ENCODE measurements at regions of chr2 and their contacts with region 1.

Region 1: DNA sequence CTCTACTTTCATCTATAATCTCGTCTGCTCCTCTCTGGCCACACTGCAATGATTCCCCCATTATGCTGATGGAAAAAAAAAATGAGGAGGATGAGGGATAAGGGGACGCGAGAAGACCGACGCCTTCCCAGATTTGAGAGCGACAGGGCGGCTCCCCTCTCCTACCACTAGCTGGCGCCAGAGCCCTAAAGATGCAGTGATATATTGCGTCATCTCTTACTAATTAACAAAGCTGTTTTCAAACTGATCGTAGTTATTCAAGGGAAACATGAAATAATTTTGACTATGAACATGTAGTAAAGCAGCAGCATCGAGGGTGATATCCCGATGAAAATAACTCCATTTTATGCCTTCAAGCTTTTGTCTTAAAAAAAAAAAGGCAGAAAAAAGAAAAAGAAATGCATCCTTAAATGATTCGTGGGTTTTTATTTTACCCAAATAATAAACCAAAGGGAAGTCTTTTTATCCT is 48.0 kb upstream of the HNRNPA3 start:
- DNase-seq: peak; percentile 91

Region 2: DNA sequence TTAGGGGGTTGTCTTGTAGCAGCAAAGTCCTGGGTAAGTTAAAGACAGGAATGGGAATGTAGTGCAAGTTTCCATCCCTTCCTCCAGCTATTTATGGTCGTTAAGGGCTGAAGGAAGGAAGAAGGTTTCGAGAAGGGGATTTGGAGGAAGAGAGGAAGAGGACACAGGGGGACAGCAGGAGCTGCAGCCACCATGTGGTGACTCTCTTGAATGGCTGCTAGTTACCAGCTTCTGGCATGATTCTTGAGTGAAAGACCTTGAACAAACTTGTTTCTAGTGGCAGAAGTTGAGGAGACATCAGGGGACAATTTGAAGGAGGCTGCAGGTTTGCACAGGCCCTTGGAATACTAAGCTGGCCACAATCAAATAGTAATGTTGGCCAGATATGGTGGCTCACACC is 778.8 kb before region 1 on chr2:
- intact Hi-C with region 1: no loop called
- DNase-seq: no peak

Region 3: DNA sequence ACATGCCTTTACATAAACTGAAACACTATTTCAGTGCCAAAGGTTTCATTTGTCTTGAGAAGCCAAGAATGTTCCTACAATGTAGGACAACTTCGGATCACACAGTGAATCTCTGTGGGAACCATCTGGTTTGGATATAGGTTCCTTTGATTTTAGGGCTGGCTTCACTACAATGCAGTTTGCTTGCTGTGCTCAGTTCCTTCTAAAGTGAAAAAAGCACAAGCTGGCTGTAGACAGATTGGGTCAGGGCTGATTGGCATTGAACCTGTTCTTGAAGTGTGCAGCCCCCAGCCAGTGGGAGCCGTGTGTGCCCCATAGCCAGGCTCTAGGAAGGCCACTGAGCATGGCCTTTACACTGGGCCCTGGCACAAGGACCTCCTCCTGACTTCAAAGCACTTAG is 119.9 kb before region 1 on chr2:
- intact Hi-C with region 1: no loop called
- DNase-seq: no peak

Region 4: DNA sequence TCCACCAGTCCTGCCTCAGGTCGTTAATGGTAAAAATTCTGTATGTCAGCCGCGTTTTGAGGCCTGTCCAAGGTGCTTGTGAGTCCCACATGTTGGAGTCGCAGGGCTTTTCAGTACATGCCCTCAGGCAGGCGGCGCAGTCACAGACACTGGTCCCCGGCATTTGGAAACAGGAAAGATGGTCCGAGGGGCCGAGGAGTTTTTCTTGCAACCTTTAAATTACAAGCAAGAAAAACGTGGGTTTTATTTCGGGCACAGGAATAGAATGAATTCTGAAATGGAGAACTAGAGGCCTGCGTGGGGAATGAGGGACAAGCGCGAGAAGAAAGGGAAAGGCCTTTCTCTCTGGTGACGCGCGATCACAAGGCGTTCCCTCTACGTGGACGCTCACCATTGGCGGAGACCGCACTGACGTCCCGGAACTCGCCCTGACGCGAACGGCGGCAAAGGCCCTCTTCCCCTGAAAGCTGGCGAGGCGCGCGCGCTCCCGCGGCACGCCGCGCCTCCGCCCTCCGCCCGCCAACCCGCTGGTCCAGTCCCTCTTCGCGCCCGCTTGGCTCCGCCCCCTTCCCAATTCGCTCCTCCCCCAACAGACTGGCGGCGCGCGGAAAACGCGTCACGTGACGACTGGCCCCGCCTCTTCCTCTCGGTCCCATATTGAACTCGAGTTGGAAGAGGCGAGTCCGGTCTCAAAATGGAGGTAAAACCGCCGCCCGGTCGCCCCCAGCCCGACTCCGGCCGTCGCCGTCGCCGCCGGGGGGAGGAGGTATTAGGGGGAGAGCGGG is 47.7 kb after region 1 on chr2 and contains the start of gene HNRNPA3:
- intact Hi-C with region 1: loop called (anchors 1 kb)
- DNase-seq: peak; percentile 100
- total RNA-seq, gene HNRNPA3: 95.7 TPM

Region 5: DNA sequence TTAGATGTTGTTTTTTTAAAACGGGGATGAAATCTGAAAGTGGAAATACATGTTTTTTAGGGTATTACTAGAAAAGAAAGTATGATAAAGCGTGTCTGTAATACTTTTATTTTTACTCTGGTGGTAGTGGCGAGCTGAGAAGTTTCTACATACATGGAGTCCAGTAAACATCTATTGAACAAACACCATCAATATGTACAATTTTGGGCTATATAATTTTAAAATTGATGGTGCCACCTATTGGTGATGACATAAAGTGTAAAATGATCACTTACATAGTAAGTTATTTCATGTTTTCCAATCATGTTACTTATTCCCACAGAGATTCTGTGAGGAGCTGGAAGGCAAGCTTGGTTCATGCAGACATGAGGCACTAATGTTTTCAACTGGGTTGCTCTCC is 131.4 kb after region 1 on chr2:
- intact Hi-C with region 1: loop called (anchors 1 kb)
- DNase-seq: no peak

Region 6: GRCh38 chr2:177306550-177306949 is 141.9 kb after region 1 on chr2:
- intact Hi-C with region 1: no loop called
- DNase-seq: no peak

Region 7: DNA sequence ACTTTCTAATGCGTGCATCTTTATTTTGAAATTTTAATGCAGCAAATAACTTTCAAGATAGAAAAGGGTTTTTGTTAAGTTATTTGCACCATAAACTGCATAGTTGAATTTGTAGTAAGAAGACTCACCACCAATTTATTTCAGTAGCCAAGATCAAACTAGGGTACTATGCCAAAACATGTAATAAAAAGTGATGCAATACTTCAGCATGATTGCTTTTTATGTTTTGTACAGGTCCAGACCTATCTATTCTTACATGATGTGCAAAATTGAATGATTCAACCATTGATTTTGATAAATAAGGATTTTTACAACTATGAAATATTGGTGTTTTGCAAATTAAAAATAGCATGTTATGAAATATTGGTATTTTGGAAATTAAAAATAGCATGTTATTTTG is 254.7 kb after region 1 on chr2:
- intact Hi-C with region 1: loop called (anchors 5 kb)
- DNase-seq: no peak

Region 8: DNA sequence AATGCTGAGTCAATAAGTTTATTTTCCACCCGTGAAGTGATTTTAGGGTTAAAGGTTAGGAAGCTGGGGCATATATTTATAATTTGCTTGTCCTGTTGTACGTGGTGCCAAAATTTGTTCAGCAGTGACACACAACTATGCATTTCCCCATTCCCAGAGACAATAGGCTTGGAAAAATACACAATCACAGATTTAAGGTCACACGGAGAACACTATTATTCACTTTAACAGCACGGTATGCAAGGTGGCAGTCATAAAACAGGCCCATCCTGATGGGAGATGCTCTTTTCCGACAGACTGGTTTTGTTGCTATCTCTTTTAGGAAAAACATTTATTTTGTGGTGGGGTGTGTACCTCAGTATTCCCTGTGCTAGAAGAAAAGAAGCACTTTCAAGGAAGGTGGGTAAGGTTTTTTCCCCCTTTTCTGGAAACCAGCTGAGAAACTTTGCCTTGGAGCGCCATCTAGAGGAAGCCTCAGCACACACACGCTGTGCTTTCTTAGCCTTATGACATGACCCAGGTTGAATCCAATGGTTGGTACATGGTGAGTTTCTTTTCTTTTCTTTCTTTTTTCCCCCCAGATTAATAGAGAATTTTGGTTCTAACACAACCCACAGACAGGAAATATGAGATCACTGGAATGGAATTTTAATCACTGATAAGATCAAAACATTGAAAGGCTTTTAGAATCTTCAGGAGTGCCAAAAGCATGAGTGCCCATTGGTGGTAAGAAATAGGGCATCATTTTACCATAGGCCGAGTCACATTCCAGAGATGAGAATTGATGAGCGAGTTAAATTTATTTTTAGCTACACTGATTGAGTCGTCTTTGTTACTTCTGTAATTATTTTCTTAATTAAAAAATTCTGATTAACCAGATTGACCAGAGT is 560.0 kb after region 1 on chr2:
- intact Hi-C with region 1: loop called (anchors 5 kb)
- DNase-seq: no peak

Measured in cardiac septum (tissue), 1 donor.